Colonic mucosa (tissue), 4 donors: ENCODE measurements at regions of chr21 and their contacts with region 1.

Region 1: DNA sequence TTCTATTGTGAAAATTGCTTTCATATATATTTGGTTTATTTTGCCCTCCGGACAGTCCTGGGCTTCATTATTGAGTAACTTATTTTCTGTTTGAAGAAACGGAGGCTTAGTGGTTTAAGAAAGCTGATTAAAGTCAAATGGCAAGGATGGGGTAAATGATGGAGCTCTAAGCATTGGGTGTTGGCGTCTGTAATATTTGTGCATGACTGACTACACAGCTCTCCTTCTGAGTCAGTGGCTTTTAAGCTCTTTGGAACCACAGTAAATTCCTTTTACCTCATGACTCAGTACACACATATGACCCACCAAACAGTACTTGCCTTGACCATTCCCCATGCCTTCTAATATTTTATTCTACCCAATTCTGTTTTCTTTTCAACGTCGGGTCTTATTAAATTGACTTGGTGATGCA is 21.0 kb downstream of the B3GALT5 start:
- DNase-seq: no peak
- H3K4me3 ChIP-seq: no peak overlapping the region
- H3K27ac ChIP-seq: peak overlapping the region; percentile 21
- H3K4me1 ChIP-seq: peaks cover 4% of the 10 kb centered on the region
- H3K27me3 ChIP-seq: no peaks in the 10 kb centered on the region
- CTCF ChIP-seq: no peak

Region 2: GRCh38 chr21:39527664-39528381 is 106.0 kb before region 1 on chr21:
- intact Hi-C with region 1: loop called (anchors 10 kb)
- DNase-seq: peak; percentile 86
- H3K4me3 ChIP-seq: no peak overlapping the region
- H3K27ac ChIP-seq: peak overlapping the region; percentile 82
- H3K4me1 ChIP-seq: peaks cover 3% of the 10 kb centered on the region
- H3K27me3 ChIP-seq: no peaks in the 10 kb centered on the region
- CTCF ChIP-seq: no peak